ENCODE measurements at regions of chr10 and their contacts with region 1.

Region 1: DNA sequence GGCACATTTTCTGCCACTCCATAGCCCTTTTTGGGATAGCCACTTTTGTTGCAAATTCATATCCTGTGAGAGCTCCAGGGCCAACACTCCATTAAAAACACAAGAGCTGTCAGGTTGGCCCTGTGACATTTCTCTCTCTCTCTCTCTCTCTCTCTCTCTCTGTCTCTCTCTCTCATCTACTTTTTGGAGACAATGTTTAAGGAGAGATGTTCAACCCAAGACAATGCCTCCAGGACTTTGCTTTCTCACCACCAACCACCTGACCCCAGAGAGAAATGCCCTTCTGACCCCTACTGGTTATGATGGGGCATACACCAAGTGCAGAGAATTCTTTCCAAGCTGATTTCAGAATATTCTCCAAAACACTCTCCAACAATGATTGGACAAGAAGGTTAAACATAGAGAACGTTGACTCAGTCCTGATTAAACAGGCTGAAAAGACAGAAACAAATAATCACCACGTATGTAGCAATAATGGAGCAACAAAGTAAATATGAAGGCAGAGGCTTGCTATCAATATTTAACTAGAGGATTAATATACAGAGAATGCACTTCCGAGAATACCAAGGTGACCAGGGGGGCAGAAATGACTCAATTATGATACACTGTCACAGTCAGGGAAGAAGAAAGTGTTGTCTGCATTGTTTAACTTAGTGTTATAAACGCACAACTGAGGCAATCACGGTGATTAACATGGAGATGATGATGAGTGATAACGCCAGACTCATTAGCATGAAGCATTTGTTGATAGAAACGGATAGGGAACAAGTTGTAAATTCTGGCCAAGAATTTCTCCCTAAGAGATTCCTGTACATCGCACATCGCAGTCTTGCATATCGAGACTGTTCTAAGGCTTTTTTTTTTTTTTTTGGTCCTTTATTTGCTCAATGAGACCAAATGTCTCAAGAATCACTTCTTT is 178.5 kb downstream of the NRP1 start:
- DNase-seq: no peak
- H3K4me3 ChIP-seq: no peak overlapping the region
- H3K27ac ChIP-seq: no peak overlapping the region
- H3K4me1 ChIP-seq: no peaks in the 10 kb centered on the region
- H3K27me3 ChIP-seq: no peaks in the 10 kb centered on the region
- CTCF ChIP-seq: peak; percentile 15 to 57 (median 48)
- EP300 ChIP-seq: no peak
- POLR2A ChIP-seq: no peak

Region 2: DNA sequence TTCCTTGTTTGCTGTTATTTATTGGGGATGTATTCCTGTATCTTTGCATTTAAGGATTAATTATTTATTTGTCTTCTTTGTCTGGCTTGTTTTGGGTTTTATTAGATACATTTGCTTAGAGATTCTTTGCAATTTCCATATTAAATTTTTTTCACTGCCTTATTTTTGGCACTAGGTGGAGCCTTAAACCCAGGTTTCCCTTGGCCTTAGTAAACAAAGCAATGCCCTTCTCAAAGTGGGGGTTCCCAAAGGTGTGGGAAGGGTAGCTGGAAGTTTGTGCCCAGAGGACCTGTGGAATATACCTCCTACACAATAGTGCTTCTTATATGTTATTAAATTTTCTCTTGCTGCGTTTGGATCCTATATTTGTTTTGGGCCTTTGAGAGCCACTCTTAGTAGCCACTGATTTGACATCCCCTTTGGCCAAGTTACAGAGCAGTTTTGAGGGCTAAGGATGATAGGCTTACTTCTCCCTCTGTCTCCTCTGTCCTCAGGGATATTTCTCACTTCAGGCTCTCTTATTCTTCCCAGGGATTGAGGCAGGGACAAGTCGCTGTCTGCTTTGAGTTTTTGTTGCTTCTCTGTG is 360.3 kb before region 1 on chr10:
- in situ Hi-C with region 1: loop called in 1 of 4 experiments (anchors 25 kb)
- intact Hi-C with region 1: no loop called
- DNase-seq: no peak
- H3K4me3 ChIP-seq: no peak overlapping the region
- H3K27ac ChIP-seq: no peak overlapping the region
- H3K4me1 ChIP-seq: no peaks in the 10 kb centered on the region
- H3K27me3 ChIP-seq: no peaks in the 10 kb centered on the region
- CTCF ChIP-seq: peak; percentile 67 to 81 (median 71)
- EP300 ChIP-seq: no peak
- POLR2A ChIP-seq: no peak